GM10248 (cell line): ENCODE measurements at regions of chr6 and their contacts with region 1.

Region 1: DNA sequence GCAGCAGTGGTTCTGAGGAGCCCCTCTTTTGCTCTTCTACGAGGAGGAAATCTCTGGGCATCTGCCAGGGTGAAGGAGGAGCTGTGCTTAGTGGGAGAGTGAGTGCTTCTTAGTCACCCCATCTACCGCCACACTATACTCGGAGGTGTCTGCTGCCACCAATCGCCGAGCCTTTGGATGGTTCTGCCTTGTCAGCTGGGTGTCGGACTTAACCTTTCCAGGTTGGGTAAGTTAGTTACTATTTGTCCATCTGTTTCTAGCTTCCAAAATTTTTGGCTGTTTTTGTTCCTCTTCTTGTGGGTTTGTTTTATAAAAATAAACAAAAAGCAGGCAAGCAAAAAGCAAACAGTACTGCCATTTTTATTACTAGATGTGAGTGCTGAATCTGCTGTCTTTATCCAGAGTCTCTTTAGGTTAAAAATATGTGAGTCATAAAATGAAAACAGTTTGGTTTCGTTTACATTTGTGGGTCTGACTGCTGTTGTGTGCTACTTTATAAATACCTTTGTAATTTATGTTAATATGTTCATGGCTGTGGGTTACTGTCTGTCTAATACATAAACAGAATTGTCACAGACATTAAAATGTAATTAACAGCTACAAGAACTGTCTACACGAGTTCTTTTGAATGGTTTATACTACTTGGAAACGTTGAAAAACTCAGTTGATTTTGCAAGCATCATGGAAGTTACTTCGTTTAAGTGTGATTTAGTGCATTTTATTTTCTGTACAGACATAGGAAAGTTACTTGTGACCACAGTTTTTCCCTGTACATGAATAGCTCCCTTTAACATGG is 89.2 kb downstream of the ARID1B start:
- DNase-seq: peak; percentile 36
- CTCF ChIP-seq: peak; percentile 44

Region 2: DNA sequence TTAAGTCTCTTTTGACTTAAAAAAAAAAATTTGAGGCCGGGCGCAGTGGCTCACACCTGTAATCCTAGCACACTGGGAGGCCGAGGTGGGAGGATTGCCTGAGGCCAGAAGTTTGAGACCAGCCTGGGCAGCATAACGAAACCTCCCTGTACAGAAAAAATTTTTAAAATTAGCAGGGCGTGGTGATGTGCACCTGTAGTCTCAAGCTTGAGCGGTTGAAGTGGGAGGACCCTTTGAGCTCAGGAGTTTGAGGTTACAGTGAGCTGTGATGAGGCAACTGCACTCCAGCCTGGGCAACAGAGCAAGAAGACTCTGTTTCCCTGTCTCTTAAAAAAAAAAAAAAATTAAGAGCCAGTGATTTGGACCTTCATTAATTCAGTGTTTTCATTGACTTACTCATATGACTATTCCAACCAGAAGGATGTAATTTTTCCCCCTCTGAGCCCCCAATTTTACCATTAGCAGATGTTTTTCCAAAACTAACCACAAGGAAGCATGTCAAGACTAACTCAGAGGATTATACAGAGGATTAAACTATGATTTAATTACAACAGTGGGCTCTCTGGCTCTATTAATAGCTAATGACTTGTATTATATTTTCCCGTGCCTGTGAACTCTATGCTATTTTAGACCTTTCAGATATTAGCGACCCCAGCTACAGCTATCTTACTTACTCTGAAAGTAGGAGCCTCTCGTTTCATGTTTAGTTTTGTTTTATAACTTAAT is 14.1 kb before region 1 on chr6:
- CTCF ChIA-PET with region 1: interaction called, 24 read pairs
- POLR2A ChIA-PET with region 1: no interaction called
- DNase-seq: no peak
- CTCF ChIP-seq: no peak